AG04449 (cell line): ENCODE measurements at regions of chr6 and their contacts with region 1.

Region 1: DNA sequence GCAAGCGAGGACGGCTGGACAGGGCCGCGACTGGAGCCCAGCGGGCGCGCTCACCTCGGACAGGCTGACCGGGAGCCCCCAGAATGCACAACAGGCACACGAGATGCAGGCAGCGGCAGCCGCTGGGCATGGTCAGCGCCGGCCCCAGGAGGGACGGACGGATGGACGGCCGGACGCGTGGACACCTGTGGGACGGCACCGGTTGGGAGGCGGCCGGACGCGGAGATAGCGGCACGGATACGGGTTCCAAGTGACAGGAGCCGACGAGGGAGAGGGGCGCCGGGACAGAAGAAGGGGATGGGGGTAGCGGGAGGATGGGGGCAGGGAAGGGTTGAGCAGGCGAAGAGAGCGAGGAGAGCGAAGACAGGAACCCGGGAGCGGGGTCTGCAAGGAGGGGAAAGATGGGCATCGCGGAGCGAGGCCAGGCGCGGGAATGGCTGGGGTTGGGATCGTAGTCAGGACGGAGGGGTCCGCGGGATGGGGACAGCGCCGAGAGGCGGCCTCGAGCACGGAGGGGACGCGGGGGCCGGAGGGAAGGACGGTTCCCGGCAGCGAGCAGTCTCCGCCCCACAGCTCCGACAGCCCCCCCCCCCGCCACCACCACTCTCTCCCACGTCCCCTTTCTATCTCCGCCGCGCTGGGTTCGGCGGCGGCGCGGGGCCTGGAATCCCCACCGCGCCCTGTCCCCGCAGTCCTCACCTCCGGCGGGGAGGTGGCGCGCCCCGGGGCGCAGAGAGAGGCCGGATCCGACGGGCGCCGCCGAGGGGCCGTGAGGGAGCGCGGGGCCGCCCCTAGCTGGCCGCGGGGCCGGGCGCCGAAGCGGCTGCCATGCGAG is 435 bp downstream of the DLK2 start:
- DNase-seq: no peak
- H3K4me3 ChIP-seq: peak overlapping the region; percentile 63
- CTCF ChIP-seq: no peak

Region 2: GRCh38 chr6:43436577-43437282 is 18.2 kb before region 1 on chr6:
- CTCF ChIA-PET with region 1: interaction called, 20 read pairs
- POLR2A ChIA-PET with region 1: interaction called, 4 read pairs
- DNase-seq: peak; percentile 23
- H3K4me3 ChIP-seq: no peak overlapping the region
- CTCF ChIP-seq: no peak

Region 3: GRCh38 chr6:43444036-43444435 is 10.9 kb before region 1 on chr6:
- CTCF ChIA-PET with region 1: interaction called, 33 read pairs
- POLR2A ChIA-PET with region 1: interaction called, 4 read pairs
- DNase-seq: no peak
- H3K4me3 ChIP-seq: no peak overlapping the region
- CTCF ChIP-seq: no peak

Region 4: DNA sequence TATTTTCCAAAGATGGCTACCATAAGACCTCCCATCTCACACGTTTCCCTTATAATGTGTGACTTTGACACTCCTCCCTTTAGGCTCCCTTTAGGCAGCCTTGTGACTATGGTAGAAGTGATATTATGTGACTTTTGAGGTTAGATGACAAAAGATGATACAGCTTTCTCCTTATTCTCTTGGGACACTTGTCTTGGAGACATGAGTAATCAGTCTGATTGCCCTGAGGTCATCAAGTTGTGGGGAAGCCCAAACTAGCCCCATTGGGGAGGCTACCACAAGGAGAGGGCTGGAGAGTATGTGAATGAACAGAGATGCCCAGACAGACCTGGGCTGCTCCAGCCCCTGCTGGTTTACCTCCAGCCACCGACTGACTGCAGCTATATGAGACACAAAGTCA is 11.0 kb after region 1 on chr6:
- CTCF ChIA-PET with region 1: interaction called, 10 read pairs
- POLR2A ChIA-PET with region 1: no interaction called
- DNase-seq: no peak
- H3K4me3 ChIP-seq: no peak overlapping the region
- CTCF ChIP-seq: no peak

Region 5: DNA sequence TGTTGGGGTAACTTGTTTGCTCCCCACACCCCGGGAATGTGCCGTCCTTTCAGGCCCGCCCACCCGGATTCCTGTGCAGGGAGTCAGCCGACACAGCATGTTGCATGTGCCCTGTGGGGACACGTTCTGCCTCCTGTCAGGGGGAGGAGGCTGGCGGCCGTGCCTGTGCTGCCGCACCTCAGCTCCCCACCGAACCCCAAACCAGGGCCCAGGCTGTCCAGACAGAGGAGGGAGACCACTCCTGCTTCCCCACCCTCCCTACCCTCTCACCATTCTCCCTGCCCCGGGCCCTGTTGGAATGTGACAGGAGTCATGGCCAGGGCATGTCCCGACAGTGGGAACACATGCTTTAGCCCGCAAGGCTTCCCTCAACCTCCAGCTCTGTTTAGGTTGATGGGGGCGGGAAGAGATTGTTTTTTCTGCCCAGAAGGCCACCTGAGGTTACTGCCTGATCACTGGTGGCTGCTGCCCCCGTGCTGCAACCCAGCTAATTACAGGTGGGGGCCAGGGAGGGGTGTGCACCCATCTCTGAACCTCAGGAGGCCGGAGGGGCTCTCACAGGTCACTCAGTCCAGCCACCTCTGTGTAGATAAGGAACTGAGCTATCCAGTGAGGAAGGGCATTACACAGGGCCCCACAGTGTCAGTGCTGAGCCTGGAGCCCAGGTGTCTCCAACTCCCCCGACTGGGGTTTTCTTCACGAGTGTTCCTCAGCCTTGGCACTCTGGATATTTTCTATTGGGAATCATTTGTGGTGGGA is 41.6 kb after region 1 on chr6:
- CTCF ChIA-PET with region 1: interaction called, 169 read pairs
- POLR2A ChIA-PET with region 1: no interaction called
- DNase-seq: no peak
- H3K4me3 ChIP-seq: no peak overlapping the region
- CTCF ChIP-seq: peak; percentile 67